Activated CD4-positive, alpha-beta memory T cell treated with anti-CD3 and anti-CD28 coated beads for 36 hours (primary cell): ENCODE measurements at regions of chr3 and their contacts with region 1.

Region 1: DNA sequence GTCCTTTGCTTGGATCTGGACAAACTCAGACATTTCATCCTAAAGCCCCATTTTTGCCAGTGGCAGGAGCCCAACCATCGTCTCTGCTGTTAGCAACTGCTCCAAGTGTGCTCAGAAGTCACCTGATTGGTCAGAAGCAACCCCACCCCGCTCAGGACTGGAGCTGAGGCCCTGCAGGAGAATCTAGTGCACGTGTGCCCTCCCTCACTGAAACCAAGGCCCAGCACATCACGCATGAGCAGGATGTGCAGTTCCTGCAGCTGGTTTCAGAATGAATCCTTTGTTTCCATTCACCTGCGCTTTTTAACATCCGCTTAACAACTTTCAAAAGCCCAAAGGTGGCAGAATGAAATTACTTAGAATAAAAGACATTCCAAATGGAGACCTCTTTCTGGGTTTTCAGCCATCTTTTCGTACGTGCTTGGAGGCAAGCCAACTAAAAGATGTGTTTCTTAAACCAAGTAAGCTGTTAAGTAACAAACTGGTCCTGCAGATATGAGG is 81.2 kb downstream of the SRGAP3 start:
- DNase-seq: peak; percentile 82
- H3K4me3 Mint-ChIP-seq: no peak overlapping the region
- H3K27ac Mint-ChIP-seq: no peak overlapping the region
- H3K4me1 Mint-ChIP-seq: no peaks in the 10 kb centered on the region
- H3K27me3 Mint-ChIP-seq: no peaks in the 10 kb centered on the region

Region 2: DNA sequence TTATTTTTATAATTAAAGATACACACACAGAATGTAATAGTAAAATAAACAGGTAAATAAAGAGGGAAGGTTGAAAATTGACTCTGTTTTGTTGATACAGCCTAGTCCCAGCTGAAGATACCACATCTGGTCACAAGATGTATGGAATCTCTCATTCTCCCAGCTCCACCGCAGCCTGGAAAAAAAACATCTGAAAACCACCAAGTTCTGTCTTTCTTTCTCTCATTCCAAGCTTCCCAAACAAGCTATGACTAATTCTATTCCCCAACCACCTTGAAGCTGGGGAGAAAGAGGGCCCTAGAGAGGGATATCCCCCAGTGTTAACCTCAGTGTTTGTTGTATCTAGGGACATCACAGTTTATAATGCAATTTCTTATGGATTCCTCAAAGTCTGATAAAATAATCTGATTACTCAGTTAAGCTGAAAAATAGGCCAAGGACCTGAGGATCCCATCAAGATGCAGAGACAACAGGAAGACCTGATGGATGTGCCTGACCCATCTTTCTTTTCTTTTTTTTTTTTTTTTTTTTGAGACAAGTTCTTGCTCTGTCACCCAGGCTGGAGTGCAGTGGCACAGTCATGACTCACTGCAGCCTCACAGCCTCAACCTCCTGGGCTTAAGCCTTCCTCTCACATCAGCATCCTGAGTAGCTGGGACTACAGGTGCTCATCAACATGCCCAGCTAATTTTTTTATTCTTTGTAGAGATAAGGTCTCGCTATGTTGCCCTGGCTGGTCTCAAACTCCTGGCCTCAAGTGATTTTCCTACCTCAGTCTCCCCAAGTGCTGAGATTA is 43.1 kb after region 1 on chr3:
- CTCF ChIA-PET with region 1: no interaction called
- POLR2A ChIA-PET with region 1: no interaction called
- intact Hi-C with region 1: loop called (anchors 1 kb)
- DNase-seq: no peak
- H3K4me3 Mint-ChIP-seq: no peak overlapping the region
- H3K27ac Mint-ChIP-seq: no peak overlapping the region
- H3K4me1 Mint-ChIP-seq: no peaks in the 10 kb centered on the region
- H3K27me3 Mint-ChIP-seq: no peaks in the 10 kb centered on the region